Endothelial cell of umbilical vein (primary cell): ENCODE measurements at regions of chr6 and their contacts with region 1.

Region 1: GRCh38 chr6:69796642-69797390 is at the start of gene LMBRD1:
- DNase-seq: peak; percentile 89
- H3K4me3 ChIP-seq: peak within 1 kb of the TSS; percentile 71 to 79 (median 77)
- H3K27ac ChIP-seq: peak within 1 kb of the TSS; percentile 21
- H3K4me1 ChIP-seq: no peaks in the 10 kb centered on the region
- H3K27me3 ChIP-seq: no peaks in the 10 kb centered on the region
- CTCF ChIP-seq: peak; percentile 64 to 98
- POLR2A ChIP-seq: no peak
- total RNA-seq, gene LMBRD1: 14.6 and 16.2 TPM in 2 replicates

Region 2: DNA sequence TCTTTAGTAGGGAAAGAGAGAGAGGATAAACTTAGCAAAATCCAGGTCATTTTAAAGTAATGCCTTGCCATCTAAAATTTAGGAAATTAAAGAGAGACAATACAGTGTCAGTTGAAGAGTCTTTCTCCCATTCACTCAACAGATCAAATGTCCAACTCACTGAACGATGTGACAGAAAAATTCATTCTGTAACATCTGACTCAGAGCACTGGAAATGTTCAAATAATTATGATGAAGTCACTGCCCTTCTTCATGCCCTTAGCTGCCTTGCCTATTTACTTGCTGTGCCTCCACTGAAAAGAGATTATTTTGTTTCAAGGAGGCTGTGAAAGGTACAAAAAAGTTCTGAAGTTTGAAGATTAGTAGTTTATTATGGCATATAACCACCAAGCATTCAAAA is 726.9 kb before region 1 on chr6:
- CTCF ChIA-PET with region 1: no interaction called
- POLR2A ChIA-PET with region 1: no interaction called
- dilution Hi-C with region 1: no loop called
- intact Hi-C with region 1: no loop called
- DNase-seq: no peak
- H3K4me3 ChIP-seq: no peak overlapping the region
- H3K27ac ChIP-seq: no peak overlapping the region
- H3K4me1 ChIP-seq: no peaks in the 10 kb centered on the region
- H3K27me3 ChIP-seq: no peaks in the 10 kb centered on the region
- CTCF ChIP-seq: no peak
- POLR2A ChIP-seq: no peak

Region 3: DNA sequence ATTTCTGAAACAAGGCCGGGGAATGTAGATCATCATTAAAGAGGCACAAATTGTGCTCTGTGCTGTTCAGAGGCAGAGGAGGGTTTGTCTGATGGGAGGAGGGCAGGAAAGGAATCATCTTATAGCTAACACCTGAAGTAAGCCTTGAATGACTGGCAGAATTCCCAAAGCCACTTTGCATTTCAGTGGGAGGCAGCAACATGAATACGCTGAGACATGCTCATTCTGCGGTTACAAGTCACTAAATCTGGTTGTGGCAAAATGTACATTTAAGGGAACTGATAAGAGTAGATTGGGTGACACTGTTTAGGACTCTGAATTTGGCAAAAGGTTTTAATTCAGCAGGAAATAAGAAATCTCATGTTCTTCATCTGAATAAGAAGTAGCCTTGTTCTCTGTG is 65.2 kb after region 1 on chr6:
- CTCF ChIA-PET with region 1: no interaction called
- POLR2A ChIA-PET with region 1: interaction called, 14 read pairs
- dilution Hi-C with region 1: no loop called
- intact Hi-C with region 1: no loop called
- DNase-seq: no peak
- H3K4me3 ChIP-seq: no peak overlapping the region
- H3K27ac ChIP-seq: no peak overlapping the region
- H3K4me1 ChIP-seq: peaks cover 6% of the 10 kb centered on the region
- H3K27me3 ChIP-seq: peaks cover 10 to 23% of the 10 kb centered on the region in 2 experiments
- CTCF ChIP-seq: no peak
- POLR2A ChIP-seq: no peak